T-cell (primary cell): ENCODE measurements at regions of chr6 and their contacts with region 1.

Region 1: GRCh38 chr6:132715204-132715603 is 1.3 kb upstream of the VNN1 start:
- DNase-seq: no peak
- ATAC-seq: no peak
- H3K4me3 ChIP-seq: no peak overlapping the region
- H3K4me3 Mint-ChIP-seq: no peak overlapping the region
- H3K27ac ChIP-seq: no peak overlapping the region
- H3K27ac Mint-ChIP-seq: no peak overlapping the region
- H3K4me1 ChIP-seq: no peaks in the 10 kb centered on the region
- H3K4me1 Mint-ChIP-seq: no peaks in the 10 kb centered on the region
- H3K27me3 ChIP-seq: peaks cover 0 to 7% of the 10 kb centered on the region in 2 experiments
- H3K27me3 Mint-ChIP-seq: peaks cover 5 to 12% of the 10 kb centered on the region in 2 donors

Region 2: DNA sequence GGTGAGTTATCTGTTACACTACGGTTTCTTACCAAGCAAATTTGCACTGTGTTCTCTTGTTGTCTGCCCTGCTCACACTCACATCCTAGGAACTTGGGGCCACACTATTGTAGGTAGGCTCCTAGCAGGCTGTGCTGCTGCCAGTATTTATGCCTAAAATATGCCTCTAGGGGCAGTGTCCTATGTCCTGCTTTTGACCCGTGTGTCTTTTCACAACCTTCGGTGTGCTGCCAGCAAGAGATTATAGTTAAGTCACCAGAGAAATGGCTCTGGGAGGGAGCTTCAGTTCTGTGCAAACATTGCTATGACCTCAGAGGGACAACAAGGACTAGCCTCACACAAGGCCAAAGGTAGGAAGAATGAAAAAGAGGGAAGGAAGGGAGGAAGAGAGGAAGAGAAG is 116.7 kb before region 1 on chr6:
- CTCF ChIA-PET with region 1: interaction called in 1 of 2 experiments, 12 read pairs
- POLR2A ChIA-PET with region 1: no interaction called
- DNase-seq: no peak
- ATAC-seq: no peak
- H3K4me3 ChIP-seq: no peak overlapping the region
- H3K4me3 Mint-ChIP-seq: no peak overlapping the region
- H3K27ac ChIP-seq: no peak overlapping the region
- H3K27ac Mint-ChIP-seq: no peak overlapping the region
- H3K4me1 ChIP-seq: no peaks in the 10 kb centered on the region
- H3K4me1 Mint-ChIP-seq: no peaks in the 10 kb centered on the region
- H3K27me3 ChIP-seq: peaks cover 0 to 6% of the 10 kb centered on the region in 2 experiments
- H3K27me3 Mint-ChIP-seq: peaks cover 16 to 24% of the 10 kb centered on the region in 2 donors

Region 3: GRCh38 chr6:132734694-132735635 is 19.8 kb after region 1 on chr6:
- CTCF ChIA-PET with region 1: no interaction called
- POLR2A ChIA-PET with region 1: no interaction called
- DNase-seq: no peak
- ATAC-seq: no peak
- H3K4me3 ChIP-seq: no peak overlapping the region
- H3K4me3 Mint-ChIP-seq: no peak overlapping the region
- H3K27ac ChIP-seq: no peak overlapping the region
- H3K27ac Mint-ChIP-seq: no peak overlapping the region
- H3K4me1 ChIP-seq: peaks cover 0 to 2% of the 10 kb centered on the region in 2 experiments
- H3K4me1 Mint-ChIP-seq: peaks cover 7 to 13% (median 10%) of the 10 kb centered on the region in 3 donors
- H3K27me3 ChIP-seq: no peaks in the 10 kb centered on the region
- H3K27me3 Mint-ChIP-seq: peaks cover 0 to 10% of the 10 kb centered on the region in 2 donors